ENCODE measurements at regions of chr14 and their contacts with region 1.

Region 1: GRCh38 chr14:88792572-88793258 is at the start of gene EML5:
- DNase-seq: peak; percentile 64 to 90 (median 81)
- ATAC-seq: peak; percentile 86
- H3K4me3 ChIP-seq: peak within 1 kb of the TSS; percentile 72 to 86
- H3K4me3 Mint-ChIP-seq: peak within 1 kb of the TSS; percentile 93
- H3K27ac ChIP-seq: peak within 1 kb of the TSS; percentile 53
- H3K27ac Mint-ChIP-seq: peak within 1 kb of the TSS; percentile 80
- H3K4me1 ChIP-seq: peaks cover 9% of the 10 kb centered on the region
- H3K4me1 Mint-ChIP-seq: peaks cover 22% of the 10 kb centered on the region
- H3K27me3 ChIP-seq: no peaks in the 10 kb centered on the region
- H3K27me3 Mint-ChIP-seq: no peaks in the 10 kb centered on the region
- CTCF ChIP-seq: peak; percentile 15
- total RNA-seq, gene EML5: 2.5 to 3.5 TPM

Region 2: DNA sequence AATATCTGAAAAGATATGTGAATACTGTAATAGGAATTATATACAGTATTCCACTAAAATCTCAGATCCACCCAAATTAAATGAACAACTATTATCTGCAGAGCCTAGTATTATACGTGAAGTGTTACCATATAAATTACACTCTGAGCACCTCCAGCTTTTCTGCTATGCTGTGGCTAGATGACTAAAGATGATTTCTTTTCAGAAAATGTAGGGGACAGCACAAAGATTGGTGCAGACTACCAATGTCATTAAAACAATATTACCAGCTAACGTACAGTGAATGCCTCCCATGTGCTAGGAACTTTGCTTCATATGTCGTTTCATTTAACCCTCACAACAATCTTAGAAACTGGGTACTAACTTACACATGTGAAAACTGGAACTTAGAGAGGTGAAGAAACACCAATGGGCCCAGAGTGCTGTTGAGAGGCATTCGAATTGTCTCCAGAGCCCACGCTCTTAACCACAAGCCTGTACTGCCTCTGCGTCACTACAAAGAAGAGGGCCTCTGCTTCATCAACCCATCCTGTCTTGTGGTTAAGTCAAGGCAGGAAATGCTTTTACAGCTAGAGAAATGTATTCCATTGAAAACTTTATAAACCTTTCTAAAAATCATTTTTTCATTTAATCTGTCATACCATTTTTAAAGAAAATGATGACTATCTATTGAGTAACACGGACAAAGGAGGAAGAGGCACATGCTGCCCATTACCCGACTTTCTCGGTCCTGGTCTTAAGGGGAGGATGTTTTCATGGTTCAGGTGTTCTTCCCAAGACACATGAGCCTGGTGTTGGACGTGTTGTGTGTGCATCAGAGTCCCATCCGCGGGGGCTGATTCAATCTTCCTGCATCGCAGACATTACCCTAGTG is 786.5 kb before region 1 on chr14:
- CTCF ChIA-PET with region 1: no interaction called
- POLR2A ChIA-PET with region 1: no interaction called
- intact Hi-C with region 1: loop called in 1 of 2 experiments (anchors 2 kb)
- DNase-seq: peak; percentile 28 to 95 (median 66)
- ATAC-seq: peak; percentile 88
- H3K4me3 ChIP-seq: peak overlapping the region; percentile 69 to 76
- H3K4me3 Mint-ChIP-seq: peak overlapping the region; percentile 88
- H3K27ac ChIP-seq: peak overlapping the region; percentile 74 to 94
- H3K27ac Mint-ChIP-seq: peak overlapping the region; percentile 96
- H3K4me1 ChIP-seq: peaks cover 63% of the 10 kb centered on the region
- H3K4me1 Mint-ChIP-seq: peaks cover 81% of the 10 kb centered on the region
- H3K27me3 ChIP-seq: no peaks in the 10 kb centered on the region
- H3K27me3 Mint-ChIP-seq: no peaks in the 10 kb centered on the region
- CTCF ChIP-seq: no peak

Region 3: DNA sequence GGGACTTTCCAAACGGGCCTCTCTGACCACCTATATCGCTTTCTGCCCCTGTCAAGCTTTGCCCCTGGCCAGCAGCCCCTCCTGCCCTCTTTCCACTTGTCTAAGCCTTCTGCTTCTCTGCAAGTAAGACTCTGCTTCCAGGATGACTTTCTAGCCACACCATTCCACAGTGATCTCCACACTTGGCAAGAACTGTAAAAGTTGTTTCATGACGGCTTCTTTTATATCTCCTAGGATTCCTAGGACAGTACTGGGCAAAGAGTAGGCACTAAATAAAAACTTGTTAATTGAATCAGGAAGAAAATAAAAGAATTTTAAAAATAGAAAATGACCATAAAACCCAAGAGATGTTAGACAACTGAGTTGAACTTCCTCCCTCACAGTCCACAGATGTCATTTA is 236.1 kb before region 1 on chr14:
- CTCF ChIA-PET with region 1: no interaction called
- POLR2A ChIA-PET with region 1: no interaction called
- intact Hi-C with region 1: loop called (anchors 2 to 5 kb)
- DNase-seq: peak in 1 of 9 experiments; percentile 4
- ATAC-seq: no peak
- H3K4me3 ChIP-seq: no peak overlapping the region
- H3K4me3 Mint-ChIP-seq: no peak overlapping the region
- H3K27ac ChIP-seq: no peak overlapping the region
- H3K27ac Mint-ChIP-seq: no peak overlapping the region
- H3K4me1 ChIP-seq: peaks cover 28% of the 10 kb centered on the region
- H3K4me1 Mint-ChIP-seq: peaks cover 34% of the 10 kb centered on the region
- H3K27me3 ChIP-seq: peaks cover 33 to 44% of the 10 kb centered on the region in 2 experiments
- H3K27me3 Mint-ChIP-seq: peaks cover 46% of the 10 kb centered on the region
- CTCF ChIP-seq: no peak

Region 4: GRCh38 chr14:88562831-88563686 is 229.7 kb before region 1 on chr14 and contains the start of gene ZC3H14:
- CTCF ChIA-PET with region 1: no interaction called
- POLR2A ChIA-PET with region 1: interaction called, 3 read pairs
- intact Hi-C with region 1: loop called in 1 of 2 experiments (anchors 5 kb)
- DNase-seq: peak; percentile 69 to 94 (median 86)
- ATAC-seq: peak; percentile 95
- H3K4me3 ChIP-seq: peak within 1 kb of the TSS; percentile 75 to 91
- H3K4me3 Mint-ChIP-seq: peak within 1 kb of the TSS; percentile 96
- H3K27ac ChIP-seq: peak within 1 kb of the TSS; percentile 52 to 66
- H3K27ac Mint-ChIP-seq: peak within 1 kb of the TSS; percentile 91
- H3K4me1 ChIP-seq: peaks cover 20% of the 10 kb centered on the region
- H3K4me1 Mint-ChIP-seq: peaks cover 35% of the 10 kb centered on the region
- H3K27me3 ChIP-seq: no peaks in the 10 kb centered on the region
- H3K27me3 Mint-ChIP-seq: peaks cover 7% of the 10 kb centered on the region
- CTCF ChIP-seq: no peak
- total RNA-seq, gene ZC3H14: 36.3 to 39.3 TPM